ENCODE measurements at regions of chr11 and their contacts with region 1.

Region 1: DNA sequence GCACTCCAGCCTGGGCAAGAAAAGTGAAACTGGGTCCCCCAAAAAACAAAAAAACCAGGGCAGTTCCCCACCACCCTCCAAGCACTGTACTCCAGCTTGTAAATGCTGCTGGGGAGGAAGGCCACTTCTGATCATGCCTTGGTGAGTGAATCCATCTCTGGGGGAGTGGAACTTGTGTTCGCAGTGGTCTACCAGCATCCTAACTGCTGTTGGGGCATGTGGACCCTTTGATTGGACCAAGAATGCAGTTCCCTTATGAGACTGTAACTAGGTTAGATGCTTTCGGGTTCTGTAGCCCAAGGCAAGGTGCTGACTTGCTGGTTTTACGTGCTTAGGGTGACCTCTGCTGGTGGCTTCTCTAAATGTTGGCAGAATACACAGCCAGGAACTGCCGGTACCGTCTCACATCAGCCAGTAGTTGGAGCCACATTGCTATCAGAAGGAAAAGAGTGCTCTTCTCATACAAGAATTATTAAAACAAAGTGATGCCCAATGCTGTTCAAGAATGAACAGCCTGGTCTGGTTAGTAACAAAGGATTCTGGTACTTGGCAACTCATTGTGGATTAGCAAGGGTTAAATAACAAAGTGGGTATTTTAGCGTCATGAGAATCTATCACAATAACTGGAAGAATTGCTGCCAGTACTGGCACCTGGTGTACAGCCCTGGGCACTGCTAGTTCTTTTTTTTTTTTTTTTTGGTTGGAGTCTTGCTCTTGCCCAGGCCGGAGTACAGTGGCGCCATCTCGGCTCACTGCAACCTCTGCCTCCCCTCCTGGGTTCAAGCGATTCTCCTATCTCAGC is 13.0 kb downstream of the EIF1AD start:
- DNase-seq: peak; percentile 94
- H3K4me3 ChIP-seq: no peak overlapping the region
- H3K27ac ChIP-seq: peak overlapping the region in 2 of 4 donors; percentile 5 to 14
- H3K4me1 ChIP-seq: peaks cover 0 to 4% (median 0%) of the 10 kb centered on the region in 4 donors
- H3K27me3 ChIP-seq: no peaks in the 10 kb centered on the region
- CTCF ChIP-seq: peak; percentile 86 to 99 (median 88)
- EP300 ChIP-seq: no peak
- POLR2A ChIP-seq: no peak

Region 2: GRCh38 chr11:65695456-65696241 is 293.3 kb before region 1 on chr11:
- in situ Hi-C with region 1: loop called in 3 of 4 experiments (anchors 25 kb)
- intact Hi-C with region 1: loop called (anchors 10 kb)
- DNase-seq: peak; percentile 82
- H3K4me3 ChIP-seq: no peak overlapping the region
- H3K27ac ChIP-seq: peak overlapping the region in 3 of 4 donors; percentile 9 to 64 (median 33)
- H3K4me1 ChIP-seq: peaks cover 0 to 16% (median 7%) of the 10 kb centered on the region in 4 donors
- H3K27me3 ChIP-seq: no peaks in the 10 kb centered on the region
- CTCF ChIP-seq: no peak
- EP300 ChIP-seq: no peak
- POLR2A ChIP-seq: no peak

Region 3: GRCh38 chr11:65711785-65712632 is 277.0 kb before region 1 on chr11 and contains the start of gene KAT5:
- in situ Hi-C with region 1: loop called in 2 of 4 experiments (anchors 25 kb)
- intact Hi-C with region 1: loop called (anchors 10 kb)
- DNase-seq: peak; percentile 100
- H3K4me3 ChIP-seq: peak within 1 kb of the TSS; percentile 59 to 84 (median 67)
- H3K27ac ChIP-seq: peak within 1 kb of the TSS; percentile 91 to 99 (median 93)
- H3K4me1 ChIP-seq: peaks cover 9 to 26% (median 15%) of the 10 kb centered on the region in 4 donors
- H3K27me3 ChIP-seq: no peaks in the 10 kb centered on the region
- CTCF ChIP-seq: peak; percentile 96 to 100 (median 99)
- EP300 ChIP-seq: peak; percentile 28
- POLR2A ChIP-seq: peak; percentile 92
- total RNA-seq, gene KAT5: 51.6 to 203 (median 74.1) TPM

Region 4: DNA sequence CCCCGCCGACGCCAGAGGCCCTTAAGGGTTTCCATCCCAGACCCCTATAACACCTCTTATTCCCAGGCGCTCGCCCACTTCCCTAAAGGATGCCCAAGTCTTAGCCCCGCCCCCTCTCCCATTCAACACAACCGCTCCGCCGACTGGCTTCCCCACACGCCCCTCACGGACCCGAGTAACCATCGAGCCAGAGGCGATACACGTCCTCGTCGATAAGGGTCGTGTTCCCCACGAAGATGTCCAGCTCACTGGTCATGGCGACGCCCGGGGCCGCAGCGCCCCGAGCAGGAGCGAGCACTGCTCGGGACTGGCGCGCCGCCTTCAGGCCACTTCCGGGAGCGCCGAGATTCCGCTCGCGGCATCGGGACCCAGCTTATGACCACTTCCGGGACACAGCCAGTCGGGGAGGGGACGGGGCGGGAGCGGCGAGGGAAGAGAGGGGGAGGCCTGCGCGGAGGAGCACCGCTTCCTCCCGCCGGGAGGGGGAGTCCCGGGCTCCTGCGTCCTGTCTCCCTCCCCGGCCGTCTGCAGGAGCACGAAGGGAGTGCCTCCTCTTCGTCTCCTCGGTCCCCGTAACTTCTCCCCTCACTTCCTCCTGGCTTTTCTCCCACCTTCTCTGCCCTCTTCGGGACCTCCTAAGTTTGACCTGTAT is 100.7 kb before region 1 on chr11 and contains the start of gene FIBP:
- in situ Hi-C with region 1: loop called in 3 of 4 experiments (anchors 10 to 25 kb)
- intact Hi-C with region 1: loop called (anchors 5 kb)
- DNase-seq: peak; percentile 98
- H3K4me3 ChIP-seq: peak within 1 kb of the TSS; percentile 50 to 79 (median 54)
- H3K27ac ChIP-seq: peak within 1 kb of the TSS; percentile 95 to 99 (median 97)
- H3K4me1 ChIP-seq: peaks cover 36 to 70% (median 55%) of the 10 kb centered on the region in 4 donors
- H3K27me3 ChIP-seq: no peaks in the 10 kb centered on the region
- CTCF ChIP-seq: peak; percentile 77 to 99 (median 87)
- EP300 ChIP-seq: no peak
- POLR2A ChIP-seq: peak; percentile 94
- total RNA-seq, gene FIBP: 53.4 to 82.6 (median 75.9) TPM